Activated T-helper 1 cell treated with anti-CD3 and anti-CD28 coated beads, Interleukin-12 subunit alpha, Interleukin-12 subunit beta, Interleukin-2, Interleukin-4 antibody, amounts not matched to agents 30 ng/mL and 10 ng/mL and 1 ng/mL, durations not matched to agents 14 hours and 24 hours and 36 hours (primary cell): ENCODE measurements at regions of chr10 and their contacts with region 1.

Region 1: GRCh38 chr10:17144757-17145156 is 15.1 kb upstream of the CUBN start:
- DNase-seq: peak; percentile 31
- H3K4me3 Mint-ChIP-seq: no peak overlapping the region
- H3K27ac Mint-ChIP-seq: peak overlapping the region; percentile 45
- H3K4me1 Mint-ChIP-seq: peaks cover 19% of the 10 kb centered on the region
- H3K27me3 Mint-ChIP-seq: no peaks in the 10 kb centered on the region

Region 2: GRCh38 chr10:16891375-16892313 is 253.1 kb before region 1 on chr10:
- intact Hi-C with region 1: loop called (anchors 5 kb)
- DNase-seq: no peak
- H3K4me3 Mint-ChIP-seq: no peak overlapping the region
- H3K27ac Mint-ChIP-seq: no peak overlapping the region
- H3K4me1 Mint-ChIP-seq: peaks cover 10% of the 10 kb centered on the region
- H3K27me3 Mint-ChIP-seq: peaks cover 9% of the 10 kb centered on the region

Region 3: GRCh38 chr10:17088118-17088806 is 56.5 kb before region 1 on chr10:
- intact Hi-C with region 1: no loop called
- DNase-seq: no peak
- H3K4me3 Mint-ChIP-seq: no peak overlapping the region
- H3K27ac Mint-ChIP-seq: no peak overlapping the region
- H3K4me1 Mint-ChIP-seq: peaks cover 11% of the 10 kb centered on the region
- H3K27me3 Mint-ChIP-seq: peaks cover 4% of the 10 kb centered on the region

Region 4: GRCh38 chr10:17169803-17170202 is 25.0 kb after region 1 on chr10:
- intact Hi-C with region 1: no loop called
- DNase-seq: no peak
- H3K4me3 Mint-ChIP-seq: no peak overlapping the region
- H3K27ac Mint-ChIP-seq: no peak overlapping the region
- H3K4me1 Mint-ChIP-seq: no peaks in the 10 kb centered on the region
- H3K27me3 Mint-ChIP-seq: peaks cover 1% of the 10 kb centered on the region

Region 5: DNA sequence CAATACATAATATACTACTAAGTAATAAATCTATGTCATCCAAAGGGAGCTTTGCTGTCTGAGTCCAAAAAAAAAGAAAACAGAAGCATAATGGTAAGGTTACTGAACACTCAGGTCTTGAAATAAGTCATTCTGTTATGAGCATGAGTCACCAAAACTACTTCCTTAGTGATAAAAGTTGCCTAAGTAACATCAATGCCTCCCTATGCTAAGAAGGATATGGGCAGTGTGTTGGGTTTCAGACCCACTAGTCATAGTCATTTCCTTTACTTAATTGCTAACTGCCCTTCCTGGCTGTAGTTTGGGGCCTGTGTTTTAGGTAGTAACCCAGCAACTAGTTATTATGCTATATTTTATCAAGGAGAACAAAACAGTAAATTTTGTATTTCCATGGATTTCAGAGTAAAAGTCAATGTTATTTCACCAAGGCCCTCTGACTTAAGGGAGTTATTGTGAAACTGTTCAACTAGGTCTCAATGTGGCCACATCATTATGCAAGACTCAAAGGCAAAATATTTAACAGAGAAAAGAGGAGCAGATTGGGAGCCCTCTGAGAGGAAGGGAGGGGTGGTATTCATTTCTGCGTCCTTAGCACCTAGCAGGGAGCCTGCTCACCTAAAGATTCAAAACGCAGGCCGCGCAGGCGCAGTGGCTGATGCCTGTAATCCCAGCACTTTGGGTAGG is 71.6 kb after region 1 on chr10:
- intact Hi-C with region 1: loop called (anchors 1 kb)
- DNase-seq: peak; percentile 34
- H3K4me3 Mint-ChIP-seq: peak overlapping the region; percentile 45
- H3K27ac Mint-ChIP-seq: peak overlapping the region; percentile 98
- H3K4me1 Mint-ChIP-seq: peaks cover 51% of the 10 kb centered on the region
- H3K27me3 Mint-ChIP-seq: no peaks in the 10 kb centered on the region